Activated CD4-positive, alpha-beta T cell treated with anti-CD3 and anti-CD28 coated beads, Interleukin-2, amount 10 ng/mL, durations not matched to agents 24 days and 14 days (primary cell): ENCODE measurements at regions of chr6 and their contacts with region 1.

Region 1: GRCh38 chr6:152170705-152171667 is 363.5 kb downstream of the ESR1 start:
- DNase-seq: peak; percentile 86
- H3K4me3 Mint-ChIP-seq: peak overlapping the region; percentile 65
- H3K27ac Mint-ChIP-seq: peak overlapping the region; percentile 94
- H3K4me1 Mint-ChIP-seq: peaks cover 19% of the 10 kb centered on the region
- H3K27me3 Mint-ChIP-seq: no peaks in the 10 kb centered on the region

Region 2: GRCh38 chr6:151390276-151391032 is 780.5 kb before region 1 on chr6:
- intact Hi-C with region 1: loop called (anchors 5 kb)
- DNase-seq: peak; percentile 99
- H3K4me3 Mint-ChIP-seq: peak overlapping the region; percentile 97
- H3K27ac Mint-ChIP-seq: peak overlapping the region; percentile 95
- H3K4me1 Mint-ChIP-seq: peaks cover 48% of the 10 kb centered on the region
- H3K27me3 Mint-ChIP-seq: no peaks in the 10 kb centered on the region

Region 3: GRCh38 chr6:151473286-151473685 is 697.7 kb before region 1 on chr6:
- intact Hi-C with region 1: no loop called
- DNase-seq: no peak
- H3K4me3 Mint-ChIP-seq: no peak overlapping the region
- H3K27ac Mint-ChIP-seq: no peak overlapping the region
- H3K4me1 Mint-ChIP-seq: peaks cover 6% of the 10 kb centered on the region
- H3K27me3 Mint-ChIP-seq: no peaks in the 10 kb centered on the region

Region 4: GRCh38 chr6:151627705-151628455 is 543.1 kb before region 1 on chr6:
- intact Hi-C with region 1: no loop called
- DNase-seq: no peak
- H3K4me3 Mint-ChIP-seq: peak overlapping the region; percentile 13
- H3K27ac Mint-ChIP-seq: no peak overlapping the region
- H3K4me1 Mint-ChIP-seq: peaks cover 12% of the 10 kb centered on the region
- H3K27me3 Mint-ChIP-seq: peaks cover 2% of the 10 kb centered on the region

Region 5: DNA sequence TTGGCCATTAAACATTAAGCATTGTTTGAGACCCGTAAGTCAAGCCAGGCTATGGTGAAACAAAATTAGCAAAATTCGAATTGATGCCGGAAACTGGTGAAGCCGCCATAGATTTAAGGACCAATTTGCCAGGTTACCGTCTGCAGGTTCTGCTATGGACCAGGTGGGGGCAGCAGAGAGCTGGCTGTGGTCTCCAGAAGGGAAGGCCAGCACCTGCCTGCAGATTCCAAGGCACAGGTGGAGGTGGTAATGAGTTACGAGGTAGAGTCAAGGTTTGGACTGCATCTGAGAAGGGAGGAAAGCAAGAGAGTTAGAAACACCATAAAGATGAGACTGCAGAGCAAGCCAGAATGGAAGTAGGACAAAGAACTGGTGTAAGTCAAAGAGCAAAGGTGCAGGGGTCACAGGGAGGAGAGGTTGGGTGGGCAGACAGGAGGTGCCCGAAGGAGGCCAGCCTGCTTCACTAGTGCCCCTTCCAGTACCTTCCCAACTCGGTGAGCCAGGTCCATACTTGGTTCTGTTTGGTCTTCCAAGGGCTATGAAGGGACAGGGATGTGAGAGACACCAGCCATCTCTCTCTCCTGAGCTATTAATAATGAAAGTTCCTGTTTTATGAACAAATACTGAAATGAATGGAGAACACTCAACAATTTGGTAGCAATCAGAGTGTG is 495.1 kb before region 1 on chr6:
- intact Hi-C with region 1: loop called (anchors 5 kb)
- DNase-seq: peak; percentile 85
- H3K4me3 Mint-ChIP-seq: no peak overlapping the region
- H3K27ac Mint-ChIP-seq: no peak overlapping the region
- H3K4me1 Mint-ChIP-seq: peaks cover 3% of the 10 kb centered on the region
- H3K27me3 Mint-ChIP-seq: peaks cover 5% of the 10 kb centered on the region

Region 6: GRCh38 chr6:151723152-151723551 is 447.8 kb before region 1 on chr6:
- intact Hi-C with region 1: loop called (anchors 1 kb)
- DNase-seq: peak; percentile 79
- H3K4me3 Mint-ChIP-seq: peak overlapping the region; percentile 29
- H3K27ac Mint-ChIP-seq: peak overlapping the region; percentile 64
- H3K4me1 Mint-ChIP-seq: peaks cover 26% of the 10 kb centered on the region
- H3K27me3 Mint-ChIP-seq: peaks cover 11% of the 10 kb centered on the region

Region 7: DNA sequence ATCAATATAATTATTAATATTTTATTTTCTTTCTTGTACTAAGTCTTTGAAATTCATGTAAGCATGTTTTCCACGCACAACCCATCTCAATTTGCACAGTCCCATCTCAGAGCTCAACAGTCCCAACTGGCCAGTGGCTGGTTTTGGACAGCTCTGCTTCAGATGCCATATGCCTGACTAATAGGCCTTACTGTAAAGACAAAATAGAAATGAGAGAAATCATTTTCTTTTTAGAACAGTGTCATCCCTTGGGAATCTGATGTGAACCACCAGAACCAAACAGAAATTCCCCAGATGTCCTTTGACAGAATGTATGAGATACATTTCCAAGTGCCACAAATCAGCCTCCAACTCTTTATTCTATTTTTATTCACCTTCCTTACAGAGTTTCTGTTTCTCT is 24.6 kb before region 1 on chr6:
- intact Hi-C with region 1: no loop called
- DNase-seq: no peak
- H3K4me3 Mint-ChIP-seq: no peak overlapping the region
- H3K27ac Mint-ChIP-seq: no peak overlapping the region
- H3K4me1 Mint-ChIP-seq: no peaks in the 10 kb centered on the region
- H3K27me3 Mint-ChIP-seq: no peaks in the 10 kb centered on the region

Region 8: DNA sequence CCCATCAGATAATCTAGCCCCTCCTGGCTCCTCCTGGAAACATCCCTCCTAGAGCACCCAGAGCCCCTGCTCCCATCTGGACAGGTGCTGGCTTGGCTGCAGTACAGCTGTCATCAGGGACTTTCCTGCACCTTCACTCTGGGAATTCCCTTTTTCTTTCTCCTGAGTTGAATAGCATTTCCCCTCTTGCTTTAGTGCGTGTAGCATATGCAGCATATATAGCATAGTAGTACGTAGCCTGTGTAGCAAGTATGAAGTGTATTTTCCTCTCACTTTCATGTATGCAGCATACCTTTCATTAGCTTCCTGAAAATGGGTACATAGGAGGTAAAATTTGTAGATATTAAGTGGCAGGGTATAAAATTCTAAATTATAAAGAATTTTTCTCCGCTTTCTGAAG is 10.6 kb before region 1 on chr6:
- intact Hi-C with region 1: loop called (anchors 1 kb)
- DNase-seq: peak; percentile 63
- H3K4me3 Mint-ChIP-seq: no peak overlapping the region
- H3K27ac Mint-ChIP-seq: peak overlapping the region; percentile 84
- H3K4me1 Mint-ChIP-seq: peaks cover 19% of the 10 kb centered on the region
- H3K27me3 Mint-ChIP-seq: no peaks in the 10 kb centered on the region

Region 9: GRCh38 chr6:152232501-152233151 is 61.6 kb after region 1 on chr6:
- intact Hi-C with region 1: loop called (anchors 2 kb)
- DNase-seq: peak; percentile 66
- H3K4me3 Mint-ChIP-seq: peak overlapping the region; percentile 72
- H3K27ac Mint-ChIP-seq: peak overlapping the region; percentile 75
- H3K4me1 Mint-ChIP-seq: peaks cover 25% of the 10 kb centered on the region
- H3K27me3 Mint-ChIP-seq: no peaks in the 10 kb centered on the region